ENCODE measurements at regions of chr9 and their contacts with region 1.

Region 1: DNA sequence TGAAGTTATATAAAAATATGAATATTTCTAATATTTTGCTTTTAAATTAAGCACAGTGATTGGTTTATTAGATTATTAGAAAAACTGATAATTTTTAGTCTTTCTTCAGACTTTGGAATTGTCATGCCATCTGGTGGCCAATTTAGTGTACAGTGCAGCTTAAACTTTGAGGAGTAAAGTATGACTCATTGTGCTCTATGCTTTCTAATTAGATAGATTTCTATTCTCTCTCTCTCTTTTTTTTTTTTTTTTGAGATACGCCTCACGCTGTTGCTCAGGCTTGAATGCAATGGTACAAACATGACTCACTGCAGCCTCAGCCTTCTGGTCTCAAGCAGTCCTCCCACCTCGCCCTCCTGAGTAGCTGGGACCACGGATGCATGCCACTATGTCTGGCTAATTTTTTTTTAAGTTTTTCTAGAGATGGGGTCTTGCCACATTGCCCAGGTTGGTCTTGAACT is 42.1 kb upstream of the GPR21 start:
- DNase-seq: peak in 10 of 14 experiments; percentile 0 to 66 (median 12)
- ATAC-seq: peak; percentile 94
- H3K4me3 ChIP-seq: no peak overlapping the region
- H3K4me3 Mint-ChIP-seq: no peak overlapping the region
- H3K27ac ChIP-seq: no peak overlapping the region
- H3K27ac Mint-ChIP-seq: peak overlapping the region; percentile 34
- H3K4me1 ChIP-seq: no peaks in the 10 kb centered on the region
- H3K4me1 Mint-ChIP-seq: no peaks in the 10 kb centered on the region
- H3K27me3 ChIP-seq: no peaks in the 10 kb centered on the region
- H3K27me3 Mint-ChIP-seq: no peaks in the 10 kb centered on the region
- CTCF ChIP-seq: peak; percentile 82

Region 2: DNA sequence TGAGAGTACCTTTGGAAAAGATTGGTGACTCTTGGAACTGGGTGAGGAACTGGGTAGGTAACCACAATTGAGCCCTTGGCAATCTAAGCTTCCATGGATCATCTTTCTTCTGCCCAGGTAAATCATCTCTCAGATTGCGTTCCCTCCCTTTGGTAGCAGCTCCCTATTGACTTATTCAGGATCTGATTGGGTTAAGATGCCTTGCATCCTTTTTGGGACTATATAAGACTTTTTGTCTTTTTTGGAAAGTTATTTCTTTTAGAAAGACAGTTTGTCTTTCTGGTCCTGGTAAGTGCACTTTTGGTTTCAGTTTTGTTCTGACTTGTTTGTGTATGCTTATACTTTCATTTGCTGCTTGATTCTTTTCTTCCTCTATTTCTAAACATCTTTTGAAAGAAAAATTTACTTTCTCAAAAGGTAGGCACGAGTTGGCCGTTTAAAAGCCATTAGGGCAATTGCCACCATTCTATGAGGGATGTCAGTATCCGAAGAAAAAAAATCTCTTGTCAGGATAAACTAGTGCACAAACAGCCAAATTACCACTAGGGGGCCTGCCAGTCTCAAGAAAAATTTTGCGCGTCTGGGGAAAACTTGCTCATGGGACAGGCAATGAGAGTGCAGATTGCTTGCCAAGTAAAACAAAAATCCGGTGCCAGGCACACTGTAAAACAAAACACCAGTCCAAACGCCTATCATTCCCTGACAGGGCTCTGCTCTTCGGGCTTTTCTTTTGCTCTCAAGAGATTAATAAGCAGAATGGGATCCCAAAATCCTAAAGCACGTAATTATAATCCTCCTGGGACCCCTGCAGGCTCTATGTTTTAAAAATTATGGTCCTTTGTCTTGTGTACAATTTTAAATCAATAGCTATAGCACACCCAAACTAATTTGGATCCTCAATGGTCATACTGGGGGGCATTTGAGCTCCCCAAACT is 526.5 kb before region 1 on chr9:
- CTCF ChIA-PET with region 1: no interaction called
- POLR2A ChIA-PET with region 1: no interaction called
- intact Hi-C with region 1: loop called in 1 of 2 experiments (anchors 2 kb)
- DNase-seq: peak; percentile 41 to 79 (median 52)
- ATAC-seq: peak; percentile 77
- H3K4me3 ChIP-seq: peak overlapping the region; percentile 56
- H3K4me3 Mint-ChIP-seq: peak overlapping the region; percentile 92
- H3K27ac ChIP-seq: peak overlapping the region in 1 of 2 donors; percentile 42
- H3K27ac Mint-ChIP-seq: peak overlapping the region; percentile 78
- H3K4me1 ChIP-seq: peaks cover 7% of the 10 kb centered on the region
- H3K4me1 Mint-ChIP-seq: peaks cover 17% of the 10 kb centered on the region
- H3K27me3 ChIP-seq: peaks cover 6 to 7% of the 10 kb centered on the region in 2 experiments
- H3K27me3 Mint-ChIP-seq: peaks cover 53% of the 10 kb centered on the region
- CTCF ChIP-seq: peak; percentile 87

Region 3: GRCh38 chr9:122897969-122898368 is 93.4 kb before region 1 on chr9:
- CTCF ChIA-PET with region 1: interaction called, 3 read pairs
- POLR2A ChIA-PET with region 1: no interaction called
- intact Hi-C with region 1: loop called in 1 of 2 experiments (anchors 5 kb)
- DNase-seq: no peak
- ATAC-seq: no peak
- H3K4me3 ChIP-seq: no peak overlapping the region
- H3K4me3 Mint-ChIP-seq: no peak overlapping the region
- H3K27ac ChIP-seq: no peak overlapping the region
- H3K27ac Mint-ChIP-seq: peak overlapping the region; percentile 76
- H3K4me1 ChIP-seq: peaks cover 28% of the 10 kb centered on the region
- H3K4me1 Mint-ChIP-seq: peaks cover 50% of the 10 kb centered on the region
- H3K27me3 ChIP-seq: no peaks in the 10 kb centered on the region
- H3K27me3 Mint-ChIP-seq: no peaks in the 10 kb centered on the region
- CTCF ChIP-seq: no peak

Region 4: DNA sequence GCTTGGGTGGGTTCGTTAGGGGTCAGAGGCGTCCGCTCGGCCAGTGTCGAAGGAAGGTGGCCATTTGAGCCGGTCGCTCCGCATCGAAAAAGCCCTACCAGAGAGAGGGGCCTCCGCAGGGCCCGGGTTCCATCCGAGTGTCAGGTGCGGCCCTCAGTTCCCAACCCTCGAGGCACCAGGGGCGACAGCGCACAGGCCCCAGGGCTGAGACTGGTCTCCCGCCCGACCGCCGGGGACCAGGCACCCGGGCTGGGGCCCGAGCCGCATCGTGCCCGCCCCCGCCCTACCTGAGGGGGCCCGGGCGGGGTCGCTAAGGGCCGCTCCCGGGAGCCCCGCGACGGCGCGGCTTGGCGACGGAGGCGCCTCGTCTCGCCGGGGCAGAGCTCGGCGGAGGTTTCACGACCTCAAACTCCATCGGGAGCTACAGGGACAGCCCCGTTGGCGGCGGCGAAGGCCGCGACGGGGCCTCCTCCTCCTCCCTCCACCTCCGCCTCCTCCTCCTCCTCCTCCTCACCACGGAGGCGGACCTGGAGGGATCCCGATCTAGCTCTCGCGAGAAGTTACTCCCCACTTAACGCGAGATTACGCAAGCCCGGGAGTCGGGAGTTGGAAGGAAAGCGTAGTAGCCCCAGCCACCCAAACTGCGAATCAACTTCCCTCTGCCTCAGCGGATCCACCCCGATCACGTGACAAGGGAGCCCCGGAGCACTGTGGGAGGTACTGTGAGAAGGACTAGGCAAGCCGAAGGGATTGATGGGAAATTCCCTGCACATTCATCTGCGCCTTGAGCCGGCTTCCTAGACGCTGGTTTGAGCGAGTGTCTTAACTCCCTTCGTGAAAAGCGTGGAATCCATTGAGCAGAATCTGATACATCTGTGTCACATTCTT is 86.3 kb before region 1 on chr9 and contains the start of gene RC3H2:
- CTCF ChIA-PET with region 1: no interaction called
- POLR2A ChIA-PET with region 1: no interaction called
- intact Hi-C with region 1: loop called in 1 of 2 experiments (anchors 2 kb)
- DNase-seq: peak; percentile 91 to 100 (median 94)
- ATAC-seq: peak; percentile 92
- H3K4me3 ChIP-seq: peak within 1 kb of the TSS; percentile 89
- H3K4me3 Mint-ChIP-seq: peak within 1 kb of the TSS; percentile 100
- H3K27ac ChIP-seq: peak within 1 kb of the TSS; percentile 87
- H3K27ac Mint-ChIP-seq: peak within 1 kb of the TSS; percentile 99
- H3K4me1 ChIP-seq: peaks cover 11% of the 10 kb centered on the region
- H3K4me1 Mint-ChIP-seq: peaks cover 36% of the 10 kb centered on the region
- H3K27me3 ChIP-seq: no peaks in the 10 kb centered on the region
- H3K27me3 Mint-ChIP-seq: no peaks in the 10 kb centered on the region
- CTCF ChIP-seq: no peak
- total RNA-seq, gene RC3H2: 85.2 to 86.8 TPM

Region 5: DNA sequence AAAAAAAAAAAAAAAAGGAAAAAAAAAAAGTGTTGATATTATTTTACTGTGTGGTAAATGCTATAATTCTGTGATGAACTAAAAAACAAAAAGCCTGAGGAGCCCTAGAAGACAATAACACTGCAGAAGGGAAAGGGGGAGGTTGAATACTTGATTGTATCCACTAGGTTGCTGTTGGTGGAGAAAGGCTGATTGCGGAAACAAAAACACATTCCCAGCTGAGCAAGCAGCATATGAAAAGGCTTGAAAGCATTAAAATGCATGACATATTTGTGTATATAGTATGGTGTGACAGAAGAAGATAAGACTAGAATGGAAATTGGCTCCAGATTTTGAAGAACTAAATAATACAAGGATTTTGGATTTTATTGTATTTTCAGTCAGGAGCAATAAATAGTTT is 41.7 kb before region 1 on chr9:
- CTCF ChIA-PET with region 1: no interaction called
- POLR2A ChIA-PET with region 1: no interaction called
- intact Hi-C with region 1: loop called in 1 of 2 experiments (anchors 5 kb)
- DNase-seq: no peak
- ATAC-seq: no peak
- H3K4me3 ChIP-seq: no peak overlapping the region
- H3K4me3 Mint-ChIP-seq: no peak overlapping the region
- H3K27ac ChIP-seq: no peak overlapping the region
- H3K27ac Mint-ChIP-seq: no peak overlapping the region
- H3K4me1 ChIP-seq: no peaks in the 10 kb centered on the region
- H3K4me1 Mint-ChIP-seq: peaks cover 63% of the 10 kb centered on the region
- H3K27me3 ChIP-seq: no peaks in the 10 kb centered on the region
- H3K27me3 Mint-ChIP-seq: no peaks in the 10 kb centered on the region
- CTCF ChIP-seq: no peak

Region 6: DNA sequence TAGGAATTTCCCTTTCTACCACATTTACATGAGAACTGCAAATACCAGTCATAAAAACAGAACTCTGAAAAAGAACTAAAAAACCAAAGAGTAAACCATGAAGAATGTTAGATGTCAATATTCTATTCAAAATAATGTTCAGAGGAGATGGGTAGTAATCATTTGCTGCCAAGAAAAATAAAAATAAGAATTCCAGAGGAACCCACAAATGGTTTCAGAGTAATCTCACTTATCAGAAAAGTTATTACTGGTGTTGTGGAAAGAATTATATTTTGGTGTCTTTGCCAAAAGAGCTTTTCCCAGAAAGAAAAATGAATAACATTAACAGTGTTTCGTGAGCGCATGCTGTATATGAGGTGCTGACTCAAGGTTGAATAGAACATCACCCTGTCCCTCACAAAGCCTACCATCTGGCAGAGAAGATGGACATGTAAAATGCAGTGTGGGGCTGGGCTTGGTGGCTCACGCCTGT is 77.6 kb after region 1 on chr9:
- CTCF ChIA-PET with region 1: no interaction called
- POLR2A ChIA-PET with region 1: no interaction called
- intact Hi-C with region 1: no loop called
- DNase-seq: no peak
- ATAC-seq: no peak
- H3K4me3 ChIP-seq: no peak overlapping the region
- H3K4me3 Mint-ChIP-seq: no peak overlapping the region
- H3K27ac ChIP-seq: no peak overlapping the region
- H3K27ac Mint-ChIP-seq: no peak overlapping the region
- H3K4me1 ChIP-seq: no peaks in the 10 kb centered on the region
- H3K4me1 Mint-ChIP-seq: peaks cover 5% of the 10 kb centered on the region
- H3K27me3 ChIP-seq: no peaks in the 10 kb centered on the region
- H3K27me3 Mint-ChIP-seq: no peaks in the 10 kb centered on the region
- CTCF ChIP-seq: no peak